CD8-positive, alpha-beta memory T cell (primary cell): ENCODE measurements at regions of chr17 and their contacts with region 1.

Region 1: GRCh38 chr17:29617125-29617480 is 5.6 kb downstream of the CORO6 start:
- DNase-seq: peak; percentile 83 to 92 (median 87)
- H3K4me3 ChIP-seq: peak overlapping the region; percentile 72
- H3K4me3 Mint-ChIP-seq: peak overlapping the region; percentile 91 to 97 (median 93)
- H3K27ac ChIP-seq: peak overlapping the region; percentile 75
- H3K27ac Mint-ChIP-seq: peak overlapping the region in 7 of 8 donors; percentile 42 to 89 (median 67)
- H3K4me1 ChIP-seq: peaks cover 44% of the 10 kb centered on the region
- H3K4me1 Mint-ChIP-seq: peaks cover 36 to 55% (median 40%) of the 10 kb centered on the region in 3 donors
- H3K27me3 ChIP-seq: no peaks in the 10 kb centered on the region
- H3K27me3 Mint-ChIP-seq: no peaks in the 10 kb centered on the region

Region 2: GRCh38 chr17:29589524-29590410 is 27.3 kb before region 1 on chr17 and contains the start of gene GIT1:
- CTCF ChIA-PET with region 1: interaction called, 436 read pairs
- POLR2A ChIA-PET with region 1: interaction called, 20 read pairs
- DNase-seq: peak; percentile 80 to 88 (median 82)
- H3K4me3 ChIP-seq: peak within 1 kb of the TSS; percentile 88
- H3K4me3 Mint-ChIP-seq: peak within 1 kb of the TSS; percentile 89 to 95 (median 93)
- H3K27ac ChIP-seq: peak within 1 kb of the TSS; percentile 59
- H3K27ac Mint-ChIP-seq: peak within 1 kb of the TSS in 7 of 8 donors; percentile 83 to 97 (median 95)
- H3K4me1 ChIP-seq: peaks cover 76% of the 10 kb centered on the region
- H3K4me1 Mint-ChIP-seq: peaks cover 57 to 78% (median 68%) of the 10 kb centered on the region in 3 donors
- H3K27me3 ChIP-seq: no peaks in the 10 kb centered on the region
- H3K27me3 Mint-ChIP-seq: no peaks in the 10 kb centered on the region
- total RNA-seq, gene GIT1: 69.7 to 69.8 TPM

Region 3: GRCh38 chr17:29640413-29640812 is 23.3 kb after region 1 on chr17:
- CTCF ChIA-PET with region 1: interaction called, 17 read pairs
- POLR2A ChIA-PET with region 1: interaction called, 6 read pairs
- DNase-seq: no peak
- H3K4me3 ChIP-seq: no peak overlapping the region
- H3K4me3 Mint-ChIP-seq: peak overlapping the region in 1 of 7 donors; percentile 27
- H3K27ac ChIP-seq: no peak overlapping the region
- H3K27ac Mint-ChIP-seq: peak overlapping the region in 7 of 8 donors; percentile 3 to 76 (median 45)
- H3K4me1 ChIP-seq: no peaks in the 10 kb centered on the region
- H3K4me1 Mint-ChIP-seq: peaks cover 11 to 19% (median 12%) of the 10 kb centered on the region in 3 donors
- H3K27me3 ChIP-seq: no peaks in the 10 kb centered on the region
- H3K27me3 Mint-ChIP-seq: no peaks in the 10 kb centered on the region

Region 4: DNA sequence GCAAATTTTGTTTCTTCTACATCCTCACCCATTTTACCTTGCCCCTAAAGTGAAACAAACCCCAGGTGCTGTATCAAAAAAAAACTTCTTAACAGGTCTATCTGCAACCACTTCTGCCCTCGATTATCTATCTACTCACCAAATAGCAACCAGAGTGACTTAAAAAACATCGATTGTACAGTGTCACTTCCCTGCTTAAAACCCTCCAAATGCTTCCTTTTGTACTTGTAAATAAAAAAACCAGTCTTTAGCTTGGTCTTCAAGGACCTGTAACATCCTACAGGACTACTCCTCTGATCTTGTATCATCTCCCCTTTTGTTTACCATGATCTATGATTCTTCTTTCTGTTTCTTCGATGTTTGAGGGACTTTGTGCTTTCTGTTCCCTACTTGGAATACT is 88.3 kb after region 1 on chr17:
- CTCF ChIA-PET with region 1: interaction called, 10 read pairs
- POLR2A ChIA-PET with region 1: interaction called, 19 read pairs
- DNase-seq: peak in 2 of 5 donors; percentile 27 to 40
- H3K4me3 ChIP-seq: peak overlapping the region; percentile 8
- H3K4me3 Mint-ChIP-seq: peak overlapping the region; percentile 14 to 93 (median 68)
- H3K27ac ChIP-seq: peak overlapping the region; percentile 18
- H3K27ac Mint-ChIP-seq: peak overlapping the region; percentile 64 to 100 (median 96)
- H3K4me1 ChIP-seq: peaks cover 46% of the 10 kb centered on the region
- H3K4me1 Mint-ChIP-seq: peaks cover 51 to 69% (median 64%) of the 10 kb centered on the region in 3 donors
- H3K27me3 ChIP-seq: no peaks in the 10 kb centered on the region
- H3K27me3 Mint-ChIP-seq: no peaks in the 10 kb centered on the region

Region 5: DNA sequence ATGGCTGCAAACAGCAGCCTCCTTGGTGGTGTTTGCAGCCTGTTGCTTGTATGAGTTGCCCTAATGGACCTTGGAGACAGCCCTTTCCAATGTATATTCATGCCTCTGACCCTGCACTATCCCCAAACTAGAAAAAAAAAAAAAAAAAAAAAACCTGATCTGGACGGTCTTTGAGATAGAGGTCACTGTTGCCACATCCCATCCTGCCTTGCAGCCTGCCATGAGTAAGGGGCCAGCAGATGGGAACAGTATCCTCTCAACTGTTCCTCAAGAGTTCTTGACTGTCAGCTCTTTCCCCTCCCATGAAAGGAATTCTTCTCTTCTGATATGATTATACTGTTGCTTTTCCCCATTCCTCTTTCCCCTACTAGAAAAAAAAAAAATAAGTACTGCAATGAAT is 160.6 kb after region 1 on chr17:
- CTCF ChIA-PET with region 1: interaction called, 26 read pairs
- POLR2A ChIA-PET with region 1: interaction called, 11 read pairs
- DNase-seq: no peak
- H3K4me3 ChIP-seq: no peak overlapping the region
- H3K4me3 Mint-ChIP-seq: no peak overlapping the region
- H3K27ac ChIP-seq: no peak overlapping the region
- H3K27ac Mint-ChIP-seq: peak overlapping the region in 1 of 8 donors; percentile 56
- H3K4me1 ChIP-seq: peaks cover 4% of the 10 kb centered on the region
- H3K4me1 Mint-ChIP-seq: peaks cover 8 to 9% (median 8%) of the 10 kb centered on the region in 3 donors
- H3K27me3 ChIP-seq: no peaks in the 10 kb centered on the region
- H3K27me3 Mint-ChIP-seq: no peaks in the 10 kb centered on the region